ENCODE measurements at regions of chr4 and their contacts with region 1.

Region 1: DNA sequence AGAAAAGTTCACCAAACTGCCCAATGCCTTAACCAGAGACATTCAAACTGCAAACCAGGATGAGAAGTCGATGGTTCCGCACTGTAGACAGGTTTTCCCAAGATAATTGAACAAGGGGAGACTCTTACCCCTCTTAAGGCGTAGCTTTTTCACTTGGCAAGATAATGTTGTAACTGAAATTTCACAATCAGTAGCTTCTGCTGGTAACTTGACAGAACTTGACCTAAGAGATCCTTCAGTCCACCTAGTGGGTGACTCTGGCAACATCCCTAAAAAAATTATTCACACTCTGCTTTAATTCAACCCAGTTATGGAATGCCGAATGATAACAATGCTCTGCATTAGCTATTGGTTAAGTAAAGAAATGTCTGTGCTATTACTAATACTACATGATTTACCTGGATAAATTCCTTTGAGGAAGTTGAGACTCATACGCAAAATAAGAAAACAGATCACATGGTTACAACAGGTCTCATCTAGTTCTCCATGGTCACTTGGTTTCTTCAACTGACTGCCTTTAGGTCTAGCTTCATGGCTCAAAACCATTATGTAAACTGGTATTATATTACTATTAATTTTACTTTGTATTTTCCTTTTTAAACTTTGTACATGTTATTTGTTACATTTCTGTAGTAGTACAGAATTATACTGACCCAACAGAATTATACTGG is 9.1 kb downstream of the ELF2 start:
- DNase-seq: no peak
- H3K4me3 ChIP-seq: no peak overlapping the region
- H3K27me3 ChIP-seq: no peaks in the 10 kb centered on the region
- CTCF ChIP-seq: peak; percentile 62

Region 2: GRCh38 chr4:139099366-139099982 is 68.4 kb before region 1 on chr4:
- CTCF ChIA-PET with region 1: interaction called, 20 read pairs
- POLR2A ChIA-PET with region 1: no interaction called
- DNase-seq: no peak
- H3K4me3 ChIP-seq: no peak overlapping the region
- H3K27me3 ChIP-seq: no peaks in the 10 kb centered on the region
- CTCF ChIP-seq: peak; percentile 84

Region 3: GRCh38 chr4:139153420-139154133 is 14.3 kb before region 1 on chr4:
- CTCF ChIA-PET with region 1: interaction called, 12 read pairs
- POLR2A ChIA-PET with region 1: no interaction called
- DNase-seq: no peak
- H3K4me3 ChIP-seq: no peak overlapping the region
- H3K27me3 ChIP-seq: no peaks in the 10 kb centered on the region
- CTCF ChIP-seq: no peak

Region 4: GRCh38 chr4:139177868-139178611 is 10.1 kb after region 1 on chr4:
- CTCF ChIA-PET with region 1: interaction called, 10 read pairs
- POLR2A ChIA-PET with region 1: no interaction called
- DNase-seq: peak; percentile 67
- H3K4me3 ChIP-seq: peak overlapping the region; percentile 92
- H3K27me3 ChIP-seq: no peaks in the 10 kb centered on the region
- CTCF ChIP-seq: no peak

Region 5: GRCh38 chr4:139943277-139943676 is 775.4 kb after region 1 on chr4:
- CTCF ChIA-PET with region 1: no interaction called
- POLR2A ChIA-PET with region 1: interaction called, 20 read pairs
- DNase-seq: no peak
- H3K4me3 ChIP-seq: no peak overlapping the region
- H3K27me3 ChIP-seq: no peaks in the 10 kb centered on the region
- CTCF ChIP-seq: no peak